Lower leg skin (tissue), 4 donors: ENCODE measurements at regions of chr2 and their contacts with region 1.

Region 1: DNA sequence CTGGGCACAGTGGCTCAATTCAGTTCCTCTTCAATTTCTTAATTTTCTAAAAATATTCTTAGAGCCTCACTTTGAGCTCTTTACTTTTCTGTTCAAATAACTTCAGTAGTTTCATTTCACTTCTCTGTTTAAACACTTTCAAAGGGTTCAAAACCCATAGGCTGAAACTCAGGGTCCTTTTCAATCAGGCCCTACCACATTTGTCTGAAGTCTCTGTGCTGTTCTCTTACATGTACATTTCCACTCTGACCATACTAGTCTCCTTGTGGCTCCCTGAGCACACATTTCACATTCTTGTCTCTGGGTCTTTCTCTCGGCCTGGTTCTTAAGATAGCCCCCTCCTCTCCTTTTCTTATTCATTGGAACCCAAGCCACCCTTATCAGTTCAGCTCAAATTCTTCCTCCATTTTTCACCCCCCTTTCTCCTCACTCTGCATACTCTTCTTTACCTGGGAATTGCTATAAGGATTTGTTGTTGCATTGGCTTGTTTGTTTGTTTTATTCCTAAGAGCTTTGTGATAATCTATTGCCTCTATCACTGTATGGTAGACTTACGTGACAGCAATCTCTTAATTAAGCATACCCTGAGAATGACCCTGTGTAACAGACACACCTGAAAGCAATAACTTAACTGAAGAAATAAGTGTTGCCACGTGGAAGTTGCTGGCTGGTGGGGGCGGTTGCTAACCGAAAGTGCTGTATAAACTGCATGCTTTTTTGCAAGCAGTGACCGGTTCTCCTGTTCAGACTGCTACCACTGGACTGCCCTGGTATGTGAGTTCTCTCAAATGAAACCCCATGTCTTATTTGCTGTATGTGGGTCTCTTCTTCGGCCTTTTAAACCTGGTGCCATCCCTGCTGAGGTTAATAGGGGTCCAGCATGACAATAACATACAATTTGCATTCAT is 27.7 kb upstream of the ACADL start:
- DNase-seq: no peak
- H3K4me3 ChIP-seq: no peak overlapping the region
- CTCF ChIP-seq: no peak
- POLR2A ChIP-seq: no peak

Region 2: DNA sequence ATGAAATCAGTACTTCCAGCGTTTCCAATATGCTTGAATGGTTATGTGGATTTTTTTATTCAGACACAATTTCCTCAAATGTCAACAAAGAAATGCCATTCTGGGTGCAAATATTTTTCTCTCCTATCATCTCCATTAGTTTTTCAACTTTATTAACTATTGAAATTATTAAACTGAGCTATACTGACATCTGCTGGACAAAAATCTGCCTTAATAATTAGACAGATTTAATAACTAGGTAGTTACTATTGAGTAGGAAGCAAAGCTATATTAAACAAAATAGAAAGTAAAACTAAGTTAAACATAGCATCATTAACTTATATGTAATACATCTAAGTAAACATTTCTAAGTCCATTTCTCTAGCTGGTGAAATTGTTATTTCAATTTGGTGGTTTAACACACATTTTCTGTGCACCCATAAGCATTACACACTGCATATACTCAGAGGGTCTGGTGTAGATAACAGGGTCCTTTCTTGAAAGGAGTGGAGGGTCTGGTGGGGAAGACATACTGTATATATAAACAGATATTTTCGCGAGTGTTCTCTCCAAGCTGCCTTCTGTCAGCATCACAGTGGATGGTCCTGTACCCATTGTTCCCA is 146.6 kb after region 1 on chr2:
- intact Hi-C with region 1: loop called (anchors 10 kb)
- DNase-seq: no peak
- H3K4me3 ChIP-seq: no peak overlapping the region
- CTCF ChIP-seq: no peak
- POLR2A ChIP-seq: no peak